H1 (cell line): ENCODE measurements at regions of chr14 and their contacts with region 1.

Region 1: DNA sequence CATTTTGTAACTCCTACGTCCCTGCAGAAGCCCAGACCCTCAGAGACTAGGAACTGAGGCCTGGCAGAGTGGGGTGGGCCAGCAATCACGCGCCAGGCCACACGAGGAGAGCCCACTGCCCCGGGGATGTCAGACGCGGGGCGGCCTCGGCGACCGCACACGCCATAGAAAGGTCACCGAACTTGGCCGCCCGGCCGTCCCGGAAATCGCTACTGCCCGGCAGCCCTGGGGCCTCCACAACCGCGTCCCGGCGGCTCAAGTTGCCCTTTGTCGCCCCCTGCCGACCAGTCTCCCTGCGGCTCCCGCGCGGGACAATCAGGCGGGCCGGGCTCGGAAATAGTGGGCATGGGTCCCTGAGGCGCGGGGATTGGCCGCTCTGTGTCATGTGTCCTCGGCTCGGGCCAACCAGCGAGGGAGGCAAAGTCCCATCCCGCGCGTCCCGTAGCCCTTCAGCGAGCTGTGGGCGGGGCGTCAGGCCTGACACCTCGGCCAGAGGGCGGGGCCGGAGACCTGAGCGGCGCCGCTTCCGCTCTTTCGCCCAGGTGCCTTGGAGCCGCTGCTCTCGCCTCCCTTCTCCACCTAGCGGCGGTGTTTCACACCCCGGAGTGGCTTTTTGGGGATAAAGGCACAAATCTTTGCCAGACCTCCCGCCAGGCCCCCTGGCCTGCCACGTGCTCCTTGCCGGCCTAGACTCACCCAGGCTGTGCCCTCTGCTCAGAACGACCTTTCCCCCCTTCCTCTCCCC is 33.4 kb upstream of the DEGS2 start:
- DNase-seq: peak; percentile 98 to 100
- H3K4me3 ChIP-seq: peak overlapping the region in 3 of 4 experiments; percentile 29 to 45 (median 42); a peak in 6 of 8 replicates
- H3K27ac ChIP-seq: no peak overlapping the region
- H3K4me1 ChIP-seq: peaks cover 4 to 12% (median 8%) of the 10 kb centered on the region in 4 experiments; a peak in 6 of 7 replicates
- H3K27me3 ChIP-seq: no peaks in the 10 kb centered on the region
- CTCF ChIP-seq: peak; percentile 58 to 82 (median 80)
- EP300 ChIP-seq: no peak
- POLR2A ChIP-seq: peak in 1 of 2 experiments; percentile 71; a peak in 1 of 3 replicates
- RAD21 ChIP-seq: peak; percentile 61 to 75

Region 2: GRCh38 chr14:100140452-100141078 is 52.3 kb before region 1 on chr14:
- CTCF ChIA-PET with region 1: interaction called, 13 read pairs
- POLR2A ChIA-PET with region 1: no interaction called
- DNase-seq: peak; percentile 58 to 78
- H3K4me3 ChIP-seq: no peak overlapping the region
- H3K27ac ChIP-seq: no peak overlapping the region; the same call in 1 of the 2 replicates
- H3K4me1 ChIP-seq: peaks cover 0 to 6% (median 5%) of the 10 kb centered on the region in 4 experiments; a peak in 5 of 7 replicates
- H3K27me3 ChIP-seq: no peaks in the 10 kb centered on the region; a peak in 1 of 7 replicates
- CTCF ChIP-seq: peak in 2 of 3 experiments; percentile 73 to 78; a peak in 3 of 4 replicates
- EP300 ChIP-seq: no peak
- POLR2A ChIP-seq: no peak
- RAD21 ChIP-seq: peak; percentile 56 to 70

Region 3: DNA sequence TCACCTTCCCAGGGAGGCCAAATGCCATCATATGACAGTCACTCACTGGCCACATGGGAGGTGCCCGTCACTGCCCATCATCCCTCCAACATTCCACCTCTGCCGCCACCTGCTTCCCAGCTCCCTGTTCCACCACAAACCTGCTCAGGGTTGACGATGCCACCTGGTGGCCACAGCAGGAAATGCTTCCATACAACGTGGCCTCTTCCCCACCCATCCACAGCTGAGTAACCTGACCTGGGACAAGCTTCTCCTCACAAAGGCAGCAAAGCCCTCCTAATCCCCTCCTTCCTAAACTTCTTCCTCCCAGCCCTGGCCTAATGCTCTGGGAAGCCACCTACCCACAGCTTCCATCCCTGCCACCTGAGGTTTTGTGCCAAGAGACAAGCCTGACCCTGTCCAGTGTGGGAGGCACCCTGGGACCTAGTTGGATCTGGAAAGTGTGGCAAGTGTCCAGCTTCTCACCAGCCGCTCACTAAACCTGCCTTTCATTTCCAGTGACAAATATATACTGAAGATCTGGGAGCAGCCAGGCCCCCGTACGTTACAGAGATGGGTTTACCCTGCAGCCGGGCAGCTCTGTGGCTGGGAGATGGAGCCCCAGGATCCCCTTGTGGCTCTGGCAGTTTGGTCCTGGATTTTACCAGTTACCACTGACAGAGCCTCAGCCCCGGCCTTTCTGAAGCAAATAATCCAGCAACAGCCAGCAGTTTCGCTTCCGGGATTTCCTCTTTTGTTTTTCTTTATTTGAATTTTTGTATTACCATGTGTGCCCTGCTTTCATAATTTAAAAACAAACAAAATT is 37.6 kb before region 1 on chr14:
- CTCF ChIA-PET with region 1: interaction called, 30 read pairs
- POLR2A ChIA-PET with region 1: no interaction called
- DNase-seq: peak; percentile 73 to 93
- H3K4me3 ChIP-seq: no peak overlapping the region
- H3K27ac ChIP-seq: no peak overlapping the region
- H3K4me1 ChIP-seq: peaks cover 0 to 11% (median 2%) of the 10 kb centered on the region in 4 experiments; a peak in 5 of 7 replicates
- H3K27me3 ChIP-seq: peaks cover 12 to 31% (median 26%) of the 10 kb centered on the region in 4 experiments
- CTCF ChIP-seq: peak in 2 of 3 experiments; percentile 95 to 99; a peak in 3 of 4 replicates
- EP300 ChIP-seq: 0 out of 3 replicates have a peak, but pooled peaks of 1 of the 2 experiments have one; percentile 22
- POLR2A ChIP-seq: no peak
- RAD21 ChIP-seq: peak; percentile 78 to 82

Region 4: DNA sequence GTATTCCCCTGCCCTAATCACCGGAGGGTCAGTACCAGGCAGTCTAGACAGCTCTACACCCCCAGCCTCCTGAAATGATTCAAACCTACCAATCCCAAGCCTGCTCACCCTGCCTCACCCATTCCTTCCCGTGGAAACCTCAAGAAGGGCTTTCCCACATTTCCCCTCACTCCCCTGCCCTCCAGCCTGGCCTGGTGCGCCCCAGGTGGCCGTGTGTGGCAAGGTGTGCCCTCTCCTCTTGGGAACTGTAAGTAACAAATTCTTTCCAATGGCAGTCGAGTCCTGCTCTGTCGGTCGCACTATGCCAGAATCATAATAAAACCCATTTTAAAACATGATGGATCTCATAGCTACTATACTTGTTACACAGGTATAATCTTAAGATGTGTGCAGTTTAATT is 19.5 kb before region 1 on chr14:
- CTCF ChIA-PET with region 1: interaction called, 16 read pairs
- POLR2A ChIA-PET with region 1: interaction called, 3 read pairs
- DNase-seq: no peak
- H3K4me3 ChIP-seq: no peak overlapping the region
- H3K27ac ChIP-seq: no peak overlapping the region
- H3K4me1 ChIP-seq: no peaks in the 10 kb centered on the region; a peak in 1 of 7 replicates
- H3K27me3 ChIP-seq: no peaks in the 10 kb centered on the region
- CTCF ChIP-seq: peak; percentile 23 to 48 (median 36); a peak in 3 of 4 replicates
- EP300 ChIP-seq: no peak
- POLR2A ChIP-seq: no peak
- RAD21 ChIP-seq: peak in 1 of 2 experiments; percentile 37; a peak in 2 of 4 replicates

Region 5: DNA sequence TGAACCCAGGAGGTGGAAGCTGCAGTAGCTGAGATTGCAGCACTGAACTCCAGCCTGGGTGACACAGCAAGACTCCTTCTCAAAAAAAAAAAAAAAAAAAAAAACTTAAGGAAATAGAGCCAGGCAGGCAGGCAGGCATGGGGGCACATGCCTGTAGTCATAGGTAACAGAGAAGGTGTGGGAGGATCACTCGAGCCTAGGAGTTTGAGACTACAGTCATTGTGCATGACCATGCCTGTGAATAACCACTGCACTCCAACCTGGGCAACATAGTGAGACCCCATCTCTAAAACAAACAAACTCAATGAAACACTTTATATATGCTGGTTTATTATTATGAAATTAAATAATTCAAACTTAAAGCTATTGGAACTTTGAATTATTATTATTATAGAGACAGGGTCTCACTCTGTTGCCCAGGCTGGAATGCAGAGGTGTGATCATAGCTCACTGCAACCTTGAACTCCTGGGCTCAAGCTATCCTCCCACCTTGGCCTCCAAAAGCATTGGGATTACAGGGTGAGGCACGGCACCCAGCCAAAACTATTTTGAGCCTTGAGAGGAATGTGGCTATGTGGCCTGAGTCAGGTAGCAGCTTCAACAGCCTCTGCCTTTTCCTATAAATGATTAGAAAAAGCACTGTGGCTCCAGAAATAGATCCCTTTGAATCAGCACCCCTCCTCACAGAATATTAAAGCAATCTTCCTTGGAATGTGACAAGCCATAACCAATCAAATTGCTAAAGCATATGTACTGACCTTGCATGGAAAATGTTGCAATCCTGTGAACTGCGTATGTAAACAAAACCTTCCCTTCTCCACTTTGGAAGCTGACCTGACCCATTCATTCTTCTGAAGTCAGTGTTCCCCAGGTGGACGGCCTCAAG is 11.3 kb after region 1 on chr14:
- CTCF ChIA-PET with region 1: interaction called, 24 read pairs
- POLR2A ChIA-PET with region 1: no interaction called
- DNase-seq: no peak
- H3K4me3 ChIP-seq: no peak overlapping the region
- H3K27ac ChIP-seq: no peak overlapping the region
- H3K4me1 ChIP-seq: peaks cover 0 to 4% (median 2%) of the 10 kb centered on the region in 4 experiments; a peak in 2 of 7 replicates
- H3K27me3 ChIP-seq: no peaks in the 10 kb centered on the region
- CTCF ChIP-seq: no peak
- EP300 ChIP-seq: no peak
- POLR2A ChIP-seq: no peak
- RAD21 ChIP-seq: no peak

Region 6: DNA sequence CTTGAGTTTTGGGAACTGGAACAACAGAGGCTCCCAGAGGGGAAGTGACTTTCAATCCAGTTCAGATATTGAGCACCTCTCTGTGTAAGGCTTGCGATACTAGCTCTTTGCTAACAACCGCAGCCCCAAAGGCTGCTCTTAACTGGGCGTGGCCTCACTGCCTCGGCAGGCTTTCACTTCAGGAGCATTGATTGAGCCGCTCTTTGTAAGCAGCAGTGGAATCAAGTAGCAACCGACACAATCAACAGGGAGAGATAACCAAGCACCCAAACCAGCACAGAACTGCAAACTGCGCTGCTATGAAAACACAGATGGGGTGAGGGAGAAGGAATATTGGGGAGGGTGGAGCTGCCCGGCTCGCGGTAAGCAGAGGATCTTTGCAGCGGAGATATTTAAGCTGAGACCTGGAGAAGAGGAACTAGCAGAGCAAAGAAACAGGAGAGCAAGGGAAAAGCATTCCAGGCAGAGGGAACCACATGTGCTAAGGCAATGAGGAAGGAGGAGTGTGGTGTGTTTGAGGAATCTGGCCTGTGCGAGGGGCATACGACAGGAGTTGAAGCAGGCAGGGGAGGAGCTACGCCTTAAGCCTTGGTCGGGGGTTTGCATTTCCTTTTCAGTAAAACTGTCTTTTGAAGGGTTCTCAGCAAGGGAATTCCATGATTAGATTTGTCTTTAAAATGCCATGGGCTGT is 28.8 kb after region 1 on chr14:
- CTCF ChIA-PET with region 1: interaction called, 23 read pairs
- POLR2A ChIA-PET with region 1: interaction called, 6 read pairs
- DNase-seq: peak in 1 of 2 experiments; percentile 67
- H3K4me3 ChIP-seq: peak overlapping the region; percentile 32 to 62 (median 46); a peak in 7 of 8 replicates
- H3K27ac ChIP-seq: peak overlapping the region; percentile 78
- H3K4me1 ChIP-seq: peaks cover 17 to 34% (median 23%) of the 10 kb centered on the region in 4 experiments
- H3K27me3 ChIP-seq: no peaks in the 10 kb centered on the region
- CTCF ChIP-seq: no peak
- EP300 ChIP-seq: no peak
- POLR2A ChIP-seq: 0 out of 3 replicates have a peak, but pooled peaks of 1 of the 2 experiments have one; percentile 36
- RAD21 ChIP-seq: no peak

Region 7: DNA sequence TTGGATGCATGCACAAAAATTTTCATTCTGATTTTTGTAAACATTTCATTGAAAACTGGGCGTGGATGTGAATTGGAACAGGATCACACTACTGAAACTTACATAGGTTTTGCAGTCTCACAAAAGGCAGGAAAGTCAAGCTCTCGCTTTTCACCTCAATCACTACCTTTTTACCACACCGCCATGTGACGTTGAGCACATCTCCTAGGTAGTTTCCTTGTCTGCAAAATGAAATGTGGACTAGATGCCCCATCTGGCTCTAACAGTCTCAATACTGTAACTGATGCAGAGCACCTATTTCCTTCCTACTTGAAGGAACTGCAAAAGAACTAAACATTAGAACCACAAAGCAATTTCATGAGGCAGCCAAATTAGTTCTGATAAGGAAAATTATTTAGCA is 41.7 kb after region 1 on chr14:
- CTCF ChIA-PET with region 1: interaction called, 18 read pairs
- POLR2A ChIA-PET with region 1: interaction called, 4 read pairs
- DNase-seq: no peak
- H3K4me3 ChIP-seq: no peak overlapping the region
- H3K27ac ChIP-seq: no peak overlapping the region
- H3K4me1 ChIP-seq: peaks cover 0 to 8% (median 4%) of the 10 kb centered on the region in 4 experiments; a peak in 3 of 7 replicates
- H3K27me3 ChIP-seq: no peaks in the 10 kb centered on the region
- CTCF ChIP-seq: no peak
- EP300 ChIP-seq: no peak
- POLR2A ChIP-seq: no peak
- RAD21 ChIP-seq: no peak